Activated T-helper 1 cell treated with anti-CD3 and anti-CD28 coated beads, Interleukin-12 subunit alpha, Interleukin-12 subunit beta, Interleukin-2, Interleukin-4 antibody, amounts not matched to agents 30 ng/mL and 10 ng/mL and 1 ng/mL, durations not matched to agents 14 hours and 24 hours and 36 hours (primary cell): ENCODE measurements at regions of chr7 and their contacts with region 1.

Region 1: GRCh38 chr7:131654668-131655326 is 98.4 kb upstream of the PODXL start:
- DNase-seq: peak; percentile 63
- H3K4me3 Mint-ChIP-seq: no peak overlapping the region
- H3K27ac Mint-ChIP-seq: no peak overlapping the region
- H3K4me1 Mint-ChIP-seq: no peaks in the 10 kb centered on the region
- H3K27me3 Mint-ChIP-seq: peaks cover 7% of the 10 kb centered on the region

Region 2: DNA sequence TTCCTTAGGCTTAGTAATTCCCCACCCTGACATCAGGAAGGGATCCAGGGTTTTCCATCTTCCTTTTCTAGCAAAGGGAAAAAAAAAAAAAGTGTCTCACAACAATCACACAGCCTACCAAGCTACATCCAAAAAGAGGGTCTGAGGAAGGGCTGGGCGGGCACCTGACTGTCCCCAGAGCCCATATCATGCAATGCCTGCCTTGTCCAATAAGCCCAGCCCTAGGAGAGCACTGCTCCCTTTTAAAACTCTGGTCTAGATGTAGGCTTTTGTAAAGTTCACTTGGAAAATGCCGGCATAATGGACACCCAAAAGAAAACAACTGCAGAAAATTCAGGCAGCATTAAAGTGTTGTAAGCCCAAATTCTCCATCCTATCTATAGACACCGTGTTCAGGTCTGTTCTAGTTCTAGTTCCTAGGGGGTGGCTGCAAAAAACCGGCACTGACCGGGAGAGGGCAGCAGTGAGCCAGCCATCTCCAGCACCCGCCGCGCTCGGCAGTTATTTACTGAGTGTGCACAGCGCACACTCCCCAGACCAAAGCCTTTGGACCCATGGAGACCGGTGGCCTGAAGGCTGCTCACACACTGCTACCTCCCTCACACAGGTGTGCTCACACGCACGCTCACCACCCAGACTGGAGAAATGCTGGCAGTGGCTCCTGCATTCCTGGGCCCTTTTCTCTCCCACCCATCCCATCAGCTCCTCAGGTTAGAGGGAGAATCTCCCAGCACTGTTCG is 147.0 kb before region 1 on chr7:
- intact Hi-C with region 1: loop called (anchors 1 kb)
- DNase-seq: peak; percentile 67
- H3K4me3 Mint-ChIP-seq: no peak overlapping the region
- H3K27ac Mint-ChIP-seq: no peak overlapping the region
- H3K4me1 Mint-ChIP-seq: peaks cover 37% of the 10 kb centered on the region
- H3K27me3 Mint-ChIP-seq: peaks cover 6% of the 10 kb centered on the region

Region 3: GRCh38 chr7:131546583-131547111 is 108.2 kb before region 1 on chr7:
- intact Hi-C with region 1: loop called (anchors 2 kb)
- DNase-seq: peak; percentile 31
- H3K4me3 Mint-ChIP-seq: no peak overlapping the region
- H3K27ac Mint-ChIP-seq: no peak overlapping the region
- H3K4me1 Mint-ChIP-seq: peaks cover 16% of the 10 kb centered on the region
- H3K27me3 Mint-ChIP-seq: peaks cover 15% of the 10 kb centered on the region

Region 4: GRCh38 chr7:131735101-131735500 is 80.3 kb after region 1 on chr7:
- intact Hi-C with region 1: no loop called
- DNase-seq: no peak
- H3K4me3 Mint-ChIP-seq: no peak overlapping the region
- H3K27ac Mint-ChIP-seq: no peak overlapping the region
- H3K4me1 Mint-ChIP-seq: no peaks in the 10 kb centered on the region
- H3K27me3 Mint-ChIP-seq: no peaks in the 10 kb centered on the region